ENCODE measurements at regions of chr7 and their contacts with region 1.

Region 1: DNA sequence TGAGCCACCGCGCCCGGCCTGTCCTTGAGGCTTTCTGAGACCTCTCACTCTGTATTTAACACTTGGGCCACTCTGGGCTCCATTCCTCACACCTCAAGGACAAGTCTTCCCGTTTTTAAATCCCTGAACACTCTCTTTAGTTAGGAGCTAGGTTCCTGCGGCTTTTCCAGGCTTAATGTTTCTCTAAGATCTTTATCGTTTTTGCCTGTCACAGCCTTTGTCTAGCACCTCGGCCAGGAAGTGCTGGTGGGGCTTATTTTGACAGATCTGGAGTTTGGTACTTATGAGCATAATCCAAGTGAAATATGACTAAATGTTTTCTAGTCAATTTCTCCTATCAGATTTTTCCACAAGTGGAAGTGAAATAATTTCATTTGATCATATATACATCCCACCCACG is 186.6 kb downstream of the DPY19L1 start:
- DNase-seq: peak; percentile 40
- H3K4me3 ChIP-seq: no peak overlapping the region
- H3K27ac ChIP-seq: no peak overlapping the region
- H3K4me1 ChIP-seq: peaks cover 18% of the 10 kb centered on the region
- H3K27me3 ChIP-seq: no peaks in the 10 kb centered on the region
- CTCF ChIP-seq: no peak
- POLR2A ChIP-seq: no peak

Region 2: GRCh38 chr7:34165929-34166550 is 684.6 kb before region 1 on chr7:
- CTCF ChIA-PET with region 1: no interaction called
- POLR2A ChIA-PET with region 1: no interaction called
- dilution Hi-C with region 1: no loop called
- intact Hi-C with region 1: no loop called
- DNase-seq: peak; percentile 37
- H3K4me3 ChIP-seq: no peak overlapping the region
- H3K27ac ChIP-seq: no peak overlapping the region
- H3K4me1 ChIP-seq: no peaks in the 10 kb centered on the region
- H3K27me3 ChIP-seq: peaks cover 0 to 2% of the 10 kb centered on the region in 2 experiments
- CTCF ChIP-seq: peak; percentile 37 to 59
- POLR2A ChIP-seq: no peak

Region 3: GRCh38 chr7:34747867-34748727 is 102.6 kb before region 1 on chr7:
- CTCF ChIA-PET with region 1: no interaction called
- POLR2A ChIA-PET with region 1: no interaction called
- dilution Hi-C with region 1: no loop called
- intact Hi-C with region 1: loop called (anchors 5 kb)
- DNase-seq: peak; percentile 97
- H3K4me3 ChIP-seq: no peak overlapping the region
- H3K27ac ChIP-seq: peak overlapping the region; percentile 36
- H3K4me1 ChIP-seq: peaks cover 16% of the 10 kb centered on the region
- H3K27me3 ChIP-seq: no peaks in the 10 kb centered on the region
- CTCF ChIP-seq: no peak
- POLR2A ChIP-seq: no peak

Region 4: DNA sequence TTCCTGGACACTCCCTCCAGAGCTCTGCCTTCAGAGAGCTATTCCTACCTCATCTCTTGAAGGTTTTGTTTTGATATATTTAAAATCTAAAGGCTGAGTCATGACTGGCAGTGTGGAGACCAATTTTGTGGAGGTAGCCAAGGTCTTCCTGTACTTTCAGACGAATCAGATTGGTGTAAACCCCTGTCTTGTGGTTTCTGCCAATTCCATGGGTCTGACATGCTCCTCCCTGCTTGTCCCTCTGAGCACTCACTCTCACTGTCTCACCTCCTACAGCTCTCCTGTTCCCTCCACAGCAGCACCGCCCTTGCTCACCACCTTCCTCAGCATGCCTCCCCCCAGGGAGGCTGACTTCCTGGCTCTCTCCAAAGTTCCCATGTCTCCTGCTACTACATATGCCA is 12.9 kb before region 1 on chr7:
- CTCF ChIA-PET with region 1: interaction called, 5 read pairs
- POLR2A ChIA-PET with region 1: no interaction called
- dilution Hi-C with region 1: no loop called
- intact Hi-C with region 1: loop called (anchors 2 kb)
- DNase-seq: no peak
- H3K4me3 ChIP-seq: peak overlapping the region in 1 of 3 experiments; percentile 10
- H3K27ac ChIP-seq: peak overlapping the region; percentile 28
- H3K4me1 ChIP-seq: peaks cover 14% of the 10 kb centered on the region
- H3K27me3 ChIP-seq: no peaks in the 10 kb centered on the region
- CTCF ChIP-seq: no peak
- POLR2A ChIP-seq: no peak

Region 5: GRCh38 chr7:35261476-35262285 is 411.0 kb after region 1 on chr7:
- CTCF ChIA-PET with region 1: no interaction called
- POLR2A ChIA-PET with region 1: no interaction called
- dilution Hi-C with region 1: no loop called
- intact Hi-C with region 1: no loop called
- DNase-seq: no peak
- H3K4me3 ChIP-seq: no peak overlapping the region
- H3K27ac ChIP-seq: no peak overlapping the region
- H3K4me1 ChIP-seq: no peaks in the 10 kb centered on the region
- H3K27me3 ChIP-seq: peaks cover 62 to 78% of the 10 kb centered on the region in 2 experiments
- CTCF ChIP-seq: no peak
- POLR2A ChIP-seq: no peak

Measured in endothelial cell of umbilical vein (primary cell).